ENCODE measurements at regions of chr11 and their contacts with region 1.

Region 1: DNA sequence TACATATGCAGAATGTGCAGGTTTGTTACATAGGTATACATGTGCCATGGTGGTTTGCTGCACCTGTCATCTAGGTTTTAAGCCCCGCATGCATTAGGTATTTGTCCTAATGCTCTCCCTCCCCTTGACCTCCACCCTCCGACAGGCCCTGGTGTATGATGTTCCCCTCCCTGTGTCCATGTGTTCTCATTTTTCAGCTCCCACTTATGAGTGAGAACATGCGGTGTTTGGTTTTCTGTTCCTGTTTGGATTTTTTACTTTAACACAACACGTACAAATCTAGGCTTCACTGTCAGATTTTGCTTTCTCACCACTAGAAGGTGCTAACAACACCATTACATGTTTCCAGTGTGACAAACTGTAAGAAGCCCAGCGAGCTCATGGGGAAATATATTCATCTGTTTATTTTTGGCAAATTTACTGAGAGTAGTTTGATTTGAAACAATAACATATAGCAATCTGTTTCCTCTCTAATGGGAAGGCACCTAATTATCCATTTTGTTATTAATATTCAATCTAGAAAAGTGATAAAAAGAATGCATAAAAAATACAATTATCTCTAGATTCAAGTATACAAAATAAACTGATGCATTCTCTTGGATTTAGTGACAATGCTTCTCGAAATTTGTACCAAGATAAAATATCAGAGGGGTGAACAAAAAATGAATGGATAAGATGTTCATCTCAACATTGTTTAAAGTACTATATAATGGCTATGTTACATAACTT is 23.2 kb upstream of the BIRC3 start:
- DNase-seq: peak; percentile 26
- ATAC-seq: peak; percentile 91
- H3K4me3 Mint-ChIP-seq: peak overlapping the region; percentile 84
- H3K27ac Mint-ChIP-seq: peak overlapping the region; percentile 94
- H3K4me1 Mint-ChIP-seq: peaks cover 72% of the 10 kb centered on the region
- H3K27me3 Mint-ChIP-seq: no peaks in the 10 kb centered on the region
- CTCF ChIP-seq: no peak

Region 2: DNA sequence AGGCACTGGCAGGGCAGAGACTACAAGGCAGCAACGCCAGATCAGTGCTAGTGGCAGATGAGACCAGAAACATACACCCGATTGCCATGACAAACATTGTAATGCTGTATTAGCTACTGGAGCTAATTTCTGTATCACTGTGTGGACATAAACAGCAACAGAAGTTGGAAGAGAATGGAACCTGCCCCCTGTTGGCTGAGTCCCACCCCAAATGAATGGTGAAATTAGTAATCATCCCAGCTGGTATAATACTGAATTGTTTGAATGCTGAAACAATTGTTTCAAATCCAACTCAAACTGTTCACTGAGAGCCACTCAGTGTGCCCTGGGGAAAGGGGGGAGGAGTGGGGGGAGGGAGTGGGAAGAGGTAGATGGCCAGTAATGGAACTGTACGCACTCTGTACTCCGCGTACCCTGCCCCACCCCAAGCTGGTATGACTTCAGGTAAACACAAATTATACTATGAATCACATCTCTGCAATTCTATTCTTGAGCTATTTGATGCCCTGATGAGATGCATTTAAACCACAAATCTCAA is 12.1 kb after region 1 on chr11:
- CTCF ChIA-PET with region 1: interaction called, 98 read pairs
- POLR2A ChIA-PET with region 1: interaction called, 424 read pairs
- intact Hi-C with region 1: loop called (anchors 1 kb)
- DNase-seq: no peak
- ATAC-seq: peak; percentile 10
- H3K4me3 Mint-ChIP-seq: peak overlapping the region; percentile 13
- H3K27ac Mint-ChIP-seq: peak overlapping the region; percentile 89
- H3K4me1 Mint-ChIP-seq: peaks cover 76% of the 10 kb centered on the region
- H3K27me3 Mint-ChIP-seq: no peaks in the 10 kb centered on the region
- CTCF ChIP-seq: no peak

Region 3: GRCh38 chr11:102317099-102317767 is 23.2 kb after region 1 on chr11 and contains the start of gene BIRC3:
- CTCF ChIA-PET with region 1: interaction called, 167 read pairs
- POLR2A ChIA-PET with region 1: interaction called, 424 read pairs
- intact Hi-C with region 1: loop called (anchors 1 kb)
- DNase-seq: peak; percentile 82
- ATAC-seq: peak; percentile 84
- H3K4me3 Mint-ChIP-seq: peak within 1 kb of the TSS; percentile 98
- H3K27ac Mint-ChIP-seq: peak within 1 kb of the TSS; percentile 98
- H3K4me1 Mint-ChIP-seq: peaks cover 77% of the 10 kb centered on the region
- H3K27me3 Mint-ChIP-seq: no peaks in the 10 kb centered on the region
- CTCF ChIP-seq: no peak
- total RNA-seq, gene BIRC3: 236 and 270 TPM in 2 replicates

Region 4: GRCh38 chr11:102323542-102324251 is 29.7 kb after region 1 on chr11:
- CTCF ChIA-PET with region 1: interaction called, 167 read pairs
- POLR2A ChIA-PET with region 1: interaction called, 424 read pairs
- intact Hi-C with region 1: no loop called
- DNase-seq: no peak
- ATAC-seq: no peak
- H3K4me3 Mint-ChIP-seq: no peak overlapping the region
- H3K27ac Mint-ChIP-seq: peak overlapping the region; percentile 30
- H3K4me1 Mint-ChIP-seq: peaks cover 69% of the 10 kb centered on the region
- H3K27me3 Mint-ChIP-seq: no peaks in the 10 kb centered on the region
- CTCF ChIP-seq: no peak

Region 5: GRCh38 chr11:102341844-102342318 is 47.8 kb after region 1 on chr11:
- CTCF ChIA-PET with region 1: interaction called, 33 read pairs
- POLR2A ChIA-PET with region 1: interaction called, 9 read pairs
- intact Hi-C with region 1: loop called (anchors 1 kb)
- DNase-seq: no peak
- ATAC-seq: peak; percentile 37
- H3K4me3 Mint-ChIP-seq: no peak overlapping the region
- H3K27ac Mint-ChIP-seq: peak overlapping the region; percentile 42
- H3K4me1 Mint-ChIP-seq: peaks cover 29% of the 10 kb centered on the region
- H3K27me3 Mint-ChIP-seq: no peaks in the 10 kb centered on the region
- CTCF ChIP-seq: peak; percentile 50

Region 6: DNA sequence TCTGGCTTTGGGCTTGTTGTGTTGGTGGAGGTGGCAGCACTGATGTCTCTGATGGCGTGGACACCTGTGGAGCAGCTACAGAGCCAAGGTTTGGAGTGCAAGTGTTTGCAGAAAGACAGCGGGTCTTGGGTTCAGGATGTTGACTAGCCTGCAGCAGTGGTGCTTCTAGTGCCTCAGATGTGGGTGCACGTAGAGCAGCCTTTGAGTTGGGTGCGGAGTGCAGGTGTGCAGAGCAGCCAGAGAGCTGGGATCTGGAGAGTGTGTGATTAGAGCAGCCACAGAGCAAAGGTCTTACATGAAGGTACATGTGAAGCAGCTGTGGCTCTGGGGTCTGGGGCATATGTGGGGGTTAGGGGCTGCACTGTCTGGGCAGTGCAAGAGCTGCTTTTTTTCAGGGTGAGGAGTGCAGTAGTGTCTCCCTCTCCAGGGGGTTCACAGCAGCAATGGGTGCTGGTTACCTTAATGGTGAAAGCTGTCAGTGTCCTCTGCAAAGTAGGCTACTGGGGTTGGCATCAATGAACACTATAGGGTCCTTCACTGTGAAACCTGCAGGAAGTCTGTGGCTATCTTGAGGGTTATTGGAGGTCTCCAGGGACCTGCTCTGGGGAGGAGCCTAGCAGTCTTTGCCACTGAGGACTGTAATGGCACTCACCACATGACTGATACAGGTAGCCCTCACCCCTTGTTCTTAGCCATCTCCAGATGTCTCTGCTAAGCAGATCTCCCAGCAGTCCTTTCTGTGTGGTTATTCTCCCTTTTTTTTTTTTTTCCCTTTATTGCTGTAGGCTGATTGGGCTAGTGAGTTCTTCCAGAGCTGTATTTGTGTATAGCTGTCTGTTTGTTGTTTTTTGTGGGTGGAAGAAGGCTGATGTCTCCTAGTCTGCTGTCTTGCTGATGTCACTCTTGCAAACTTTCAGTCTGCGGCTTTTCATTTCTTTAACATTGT is 67.3 kb after region 1 on chr11:
- CTCF ChIA-PET with region 1: no interaction called
- POLR2A ChIA-PET with region 1: no interaction called
- intact Hi-C with region 1: no loop called
- DNase-seq: no peak
- ATAC-seq: peak; percentile 79
- H3K4me3 Mint-ChIP-seq: no peak overlapping the region
- H3K27ac Mint-ChIP-seq: no peak overlapping the region
- H3K4me1 Mint-ChIP-seq: peaks cover 22% of the 10 kb centered on the region
- H3K27me3 Mint-ChIP-seq: no peaks in the 10 kb centered on the region
- CTCF ChIP-seq: no peak

Measured in activated B cell treated with CpG ODN at 0.5 μM for 24 hours (primary cell).